ENCODE measurements at regions of chr14 and their contacts with region 1.

Region 1: GRCh38 chr14:22822571-22823098 is 7.1 kb upstream of the MRPL52 start:
- H3K4me3 Mint-ChIP-seq: peak overlapping the region; percentile 58
- H3K27ac Mint-ChIP-seq: peak overlapping the region; percentile 72
- H3K4me1 Mint-ChIP-seq: peaks cover 54% of the 10 kb centered on the region
- H3K27me3 Mint-ChIP-seq: no peaks in the 10 kb centered on the region

Region 2: GRCh38 chr14:22505697-22506377 is 316.8 kb before region 1 on chr14:
- intact Hi-C with region 1: no loop called
- H3K4me3 Mint-ChIP-seq: no peak overlapping the region
- H3K27ac Mint-ChIP-seq: no peak overlapping the region
- H3K4me1 Mint-ChIP-seq: peaks cover 24% of the 10 kb centered on the region
- H3K27me3 Mint-ChIP-seq: no peaks in the 10 kb centered on the region

Region 3: DNA sequence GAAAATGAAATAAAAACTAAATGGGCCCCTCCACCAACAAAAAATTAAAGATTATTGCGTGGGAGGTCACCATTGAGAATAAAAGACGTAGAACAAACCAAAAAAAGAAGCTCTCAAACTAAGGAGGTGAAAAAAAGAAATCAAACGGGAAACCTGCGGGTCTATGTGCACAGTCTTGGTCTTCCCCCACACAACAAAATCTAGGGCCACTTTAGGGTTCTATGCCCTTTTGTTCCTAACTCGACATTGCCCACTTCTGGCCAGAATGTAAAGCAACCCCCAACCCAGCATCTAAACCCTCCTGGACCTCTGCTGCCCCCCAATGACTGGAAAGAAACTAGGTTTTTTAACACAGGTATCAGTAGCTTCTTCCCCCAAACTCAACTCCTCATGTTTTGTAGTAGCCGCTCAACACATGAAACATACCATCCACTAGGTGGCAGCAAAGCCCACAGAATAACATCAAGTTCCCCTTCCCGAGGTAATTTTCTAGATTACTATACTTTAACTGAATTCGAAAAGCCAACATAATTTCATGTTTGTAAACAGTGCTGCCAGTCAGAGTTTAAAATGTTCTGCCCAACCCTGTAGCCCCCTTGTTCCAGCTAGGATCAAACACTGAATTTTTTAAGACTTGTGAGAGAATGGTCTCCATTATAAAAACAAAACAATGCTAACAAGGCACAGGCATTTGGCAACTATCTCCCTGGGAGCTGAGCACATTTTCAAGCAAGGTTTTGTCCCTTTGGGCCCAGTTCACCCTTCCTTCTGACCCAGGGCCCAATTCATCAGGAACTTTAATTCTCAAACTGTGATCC is 252.3 kb before region 1 on chr14:
- intact Hi-C with region 1: loop called (anchors 5 kb)
- H3K4me3 Mint-ChIP-seq: no peak overlapping the region
- H3K27ac Mint-ChIP-seq: no peak overlapping the region
- H3K4me1 Mint-ChIP-seq: peaks cover 17% of the 10 kb centered on the region
- H3K27me3 Mint-ChIP-seq: no peaks in the 10 kb centered on the region

Region 4: DNA sequence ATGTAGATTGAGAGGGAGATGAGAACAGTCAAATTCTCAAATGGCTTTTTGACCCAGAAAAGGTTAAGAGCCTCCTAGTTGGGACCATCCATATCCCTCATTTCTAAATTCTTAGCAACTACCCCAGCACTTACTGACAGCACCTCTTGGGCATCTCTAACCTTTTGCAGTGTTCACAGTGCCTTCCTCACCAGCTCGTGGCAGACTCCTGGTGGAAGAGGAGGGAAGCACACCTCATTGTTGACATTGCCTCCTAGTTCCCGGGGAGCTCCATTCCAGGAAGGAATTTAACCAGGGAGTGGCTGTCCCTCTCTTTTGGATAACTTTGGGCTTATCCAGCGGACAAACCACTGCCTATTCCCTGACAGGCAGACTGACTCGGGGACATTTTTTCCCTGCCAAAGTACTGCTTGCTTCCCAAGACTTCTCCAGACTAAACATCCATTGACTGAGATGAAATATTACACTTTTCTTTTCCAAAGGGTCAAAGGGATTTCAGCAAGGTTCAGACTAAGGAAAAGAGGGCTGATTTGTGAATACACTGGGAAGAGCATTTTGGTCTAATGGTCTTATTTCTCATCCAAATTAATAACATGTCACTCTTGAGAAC is 169.5 kb before region 1 on chr14:
- intact Hi-C with region 1: loop called (anchors 2 kb)
- H3K4me3 Mint-ChIP-seq: no peak overlapping the region
- H3K27ac Mint-ChIP-seq: no peak overlapping the region
- H3K4me1 Mint-ChIP-seq: no peaks in the 10 kb centered on the region
- H3K27me3 Mint-ChIP-seq: peaks cover 8% of the 10 kb centered on the region

Region 5: DNA sequence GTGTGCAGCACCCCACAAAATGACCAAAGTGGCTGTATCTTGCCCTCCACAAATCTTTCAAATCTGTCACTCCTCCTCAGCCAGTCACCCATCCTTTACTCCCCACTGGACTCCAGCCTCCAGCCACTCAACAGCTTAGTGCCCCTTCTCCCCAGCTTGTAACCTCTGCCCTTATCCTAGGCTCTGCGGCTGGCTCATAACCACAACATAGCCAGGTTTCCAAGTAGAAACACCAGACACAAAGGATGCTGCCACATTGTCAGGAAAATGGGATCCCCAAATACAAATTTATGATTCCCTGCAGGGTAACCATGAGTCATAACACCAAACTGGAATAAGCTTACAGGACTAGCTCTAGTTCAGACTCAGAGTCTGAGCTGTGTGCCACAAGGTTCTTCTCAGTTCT is 41.0 kb before region 1 on chr14:
- intact Hi-C with region 1: loop called (anchors 1 kb)
- H3K4me3 Mint-ChIP-seq: no peak overlapping the region
- H3K27ac Mint-ChIP-seq: peak overlapping the region; percentile 90
- H3K4me1 Mint-ChIP-seq: peaks cover 73% of the 10 kb centered on the region
- H3K27me3 Mint-ChIP-seq: no peaks in the 10 kb centered on the region

Region 6: DNA sequence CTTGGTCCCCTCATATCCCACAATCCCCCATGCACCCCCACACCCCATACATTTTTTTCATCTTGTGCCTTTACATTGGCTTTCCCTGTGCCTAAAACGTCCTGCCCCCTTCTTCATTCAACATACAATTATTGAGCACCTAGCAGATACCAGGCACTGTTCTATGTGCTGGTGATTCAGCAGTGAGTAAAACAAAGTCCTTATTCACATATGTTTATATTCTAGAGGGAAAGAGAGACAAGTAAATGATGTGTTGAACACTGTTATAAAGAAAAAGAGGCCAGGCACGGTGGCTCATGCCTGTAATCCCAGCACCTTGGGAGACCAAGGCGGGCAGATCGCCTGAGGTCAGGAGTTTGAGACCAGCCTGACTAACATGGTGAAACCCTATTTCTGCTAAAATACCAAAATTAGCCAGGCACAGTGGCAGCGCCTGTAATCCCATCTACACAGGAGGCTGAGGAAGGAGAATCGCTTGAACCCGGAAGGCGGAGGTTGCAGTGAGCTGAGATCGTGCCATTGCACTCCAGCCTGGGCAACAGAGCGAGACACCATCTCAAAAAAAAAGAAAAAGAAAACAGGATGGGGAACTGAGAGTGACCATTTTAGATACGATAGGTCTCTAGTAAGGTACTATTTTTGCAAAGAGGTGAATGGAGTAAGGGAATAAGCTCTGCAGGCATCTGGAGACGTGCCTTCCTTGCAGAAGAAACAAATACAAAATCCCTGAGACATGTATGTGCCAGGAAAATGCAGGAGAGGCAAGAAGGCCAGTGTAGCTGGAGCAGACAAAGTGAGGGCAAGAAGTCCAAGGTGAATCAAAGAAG is 19.6 kb before region 1 on chr14:
- intact Hi-C with region 1: loop called (anchors 2 kb)
- H3K4me3 Mint-ChIP-seq: no peak overlapping the region
- H3K27ac Mint-ChIP-seq: peak overlapping the region; percentile 85
- H3K4me1 Mint-ChIP-seq: peaks cover 95% of the 10 kb centered on the region
- H3K27me3 Mint-ChIP-seq: no peaks in the 10 kb centered on the region

Region 7: DNA sequence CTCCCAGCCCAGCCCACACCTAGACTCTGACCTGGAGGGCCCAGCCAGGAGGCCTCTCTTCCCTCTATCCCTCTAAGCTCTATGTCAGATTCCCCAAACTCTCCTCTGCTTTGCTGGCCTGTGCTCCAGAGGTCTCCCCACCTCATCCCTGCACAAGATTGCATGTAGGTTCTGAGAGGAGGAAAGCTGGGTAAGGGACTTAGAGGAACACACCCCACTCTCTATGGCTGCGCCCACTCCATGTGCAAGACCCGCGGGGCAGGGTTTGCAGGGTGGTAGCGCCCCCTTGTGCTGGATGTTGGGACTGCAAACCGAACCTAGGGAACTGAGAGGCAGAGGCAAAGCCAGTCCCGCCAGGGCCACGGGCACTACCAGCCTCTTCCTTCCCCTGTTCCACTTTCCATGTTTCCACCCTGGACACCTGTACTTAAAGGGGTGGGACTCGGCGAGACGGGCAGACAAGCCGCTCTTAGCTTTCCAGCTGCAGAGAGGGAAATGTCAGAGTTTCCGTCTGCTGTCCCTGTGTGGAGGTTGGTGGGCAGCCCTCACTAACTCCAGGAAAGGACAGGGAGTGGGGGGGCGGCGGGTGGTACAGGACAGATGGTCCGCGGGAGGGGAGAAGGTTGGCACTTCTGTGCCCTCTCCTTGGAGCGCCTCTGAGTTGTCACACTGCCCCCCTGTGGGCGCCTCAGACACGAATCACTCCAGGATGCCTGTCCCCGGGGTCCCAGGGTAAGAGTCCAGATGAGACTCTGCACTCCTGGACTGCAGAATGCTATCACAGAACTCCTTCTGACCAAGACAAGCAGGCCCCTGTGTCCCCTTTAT is 30.5 kb after region 1 on chr14:
- intact Hi-C with region 1: loop called (anchors 1 kb)
- H3K4me3 Mint-ChIP-seq: peak overlapping the region; percentile 69
- H3K27ac Mint-ChIP-seq: peak overlapping the region; percentile 74
- H3K4me1 Mint-ChIP-seq: peaks cover 53% of the 10 kb centered on the region
- H3K27me3 Mint-ChIP-seq: peaks cover 10% of the 10 kb centered on the region

Region 8: GRCh38 chr14:22900081-22900799 is 77.6 kb after region 1 on chr14:
- intact Hi-C with region 1: loop called (anchors 5 kb)
- H3K4me3 Mint-ChIP-seq: no peak overlapping the region
- H3K27ac Mint-ChIP-seq: no peak overlapping the region
- H3K4me1 Mint-ChIP-seq: peaks cover 4% of the 10 kb centered on the region
- H3K27me3 Mint-ChIP-seq: no peaks in the 10 kb centered on the region

Measured in dendritic cell treated with granulocyte-macrophage colony-stimulating factor and Interleukin-4, amounts not matched to agents 40 ng/mL and 50 ng/mL, for 4 days (primary cell).